OCI-LY7 (cell line): ENCODE measurements at regions of chr12 and their contacts with region 1.

Region 1: DNA sequence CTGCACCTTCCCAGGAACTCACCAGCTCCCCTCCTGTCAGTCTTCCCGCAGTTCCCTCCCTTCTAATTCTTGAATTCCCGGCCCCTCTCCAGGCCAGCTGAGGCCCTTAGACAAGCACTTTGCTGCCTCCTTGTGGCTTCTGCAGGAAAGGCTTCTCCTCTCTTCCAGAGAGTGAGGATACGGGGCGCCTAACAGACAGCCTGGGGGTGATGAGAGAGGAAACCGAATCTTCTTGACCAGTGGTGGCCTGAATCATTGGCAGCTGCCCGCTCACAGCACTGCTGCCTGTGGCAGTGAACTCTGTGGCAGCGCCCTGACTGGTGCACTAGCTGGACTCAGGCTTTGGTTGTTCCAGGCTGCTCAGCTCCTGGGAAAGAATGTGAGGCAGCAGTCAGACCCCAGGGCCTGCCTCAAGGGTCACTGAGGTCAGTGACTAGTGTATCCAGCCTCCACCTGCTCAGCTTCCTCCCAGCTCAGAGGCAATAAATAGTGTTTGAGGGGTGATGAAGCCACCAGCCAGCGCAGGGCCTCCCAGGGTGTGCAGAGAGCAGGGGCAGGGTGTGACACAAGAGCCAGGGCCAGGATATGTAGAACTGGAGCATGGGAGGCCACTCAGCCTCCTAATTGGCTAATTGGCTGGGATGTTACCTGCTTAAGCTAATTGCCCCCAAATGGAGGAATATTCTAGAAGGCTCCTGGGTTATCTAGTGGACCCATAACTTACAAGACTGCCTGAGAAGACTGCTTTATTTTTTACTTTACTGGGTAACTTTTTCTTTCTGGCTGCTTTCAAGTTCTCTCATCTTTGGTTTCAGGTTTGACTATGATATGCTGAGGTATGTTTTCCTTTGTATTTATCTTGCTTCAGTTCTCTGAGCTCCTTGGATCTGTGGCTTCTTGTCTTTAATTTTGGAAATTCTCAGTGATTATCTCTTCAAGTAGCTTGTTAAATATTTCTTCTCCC is 12.9 kb upstream of the MCRS1 start:
- DNase-seq: peak; percentile 69
- H3K4me3 ChIP-seq: no peak overlapping the region
- H3K27ac ChIP-seq: no peak overlapping the region
- H3K4me1 ChIP-seq: no peaks in the 10 kb centered on the region
- CTCF ChIP-seq: peak; percentile 90

Region 2: DNA sequence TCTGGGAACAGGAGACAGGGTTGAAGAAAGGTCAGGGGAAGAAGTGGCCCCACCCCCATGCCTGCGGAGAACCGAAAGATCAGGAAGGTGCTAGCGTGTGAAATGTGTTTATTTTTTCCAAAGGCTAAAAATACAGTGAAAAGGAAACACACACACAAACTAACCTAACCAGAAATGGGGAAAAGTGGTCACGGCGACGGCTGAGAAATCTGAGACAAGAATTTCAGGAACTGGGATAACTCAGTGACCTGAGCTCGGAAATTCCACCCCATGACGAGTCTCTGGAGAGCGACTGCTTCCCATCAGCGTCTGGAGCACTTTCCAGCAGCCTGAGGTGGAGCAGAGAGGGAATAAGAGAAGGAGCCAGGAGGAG is 698.6 kb before region 1 on chr12:
- CTCF ChIA-PET with region 1: no interaction called
- POLR2A ChIA-PET with region 1: no interaction called
- intact Hi-C with region 1: no loop called
- DNase-seq: no peak
- H3K4me3 ChIP-seq: no peak overlapping the region
- H3K27ac ChIP-seq: no peak overlapping the region
- H3K4me1 ChIP-seq: no peaks in the 10 kb centered on the region
- CTCF ChIP-seq: no peak

Region 3: GRCh38 chr12:49553512-49554088 is 27.3 kb before region 1 on chr12:
- CTCF ChIA-PET with region 1: interaction called, 4 read pairs
- POLR2A ChIA-PET with region 1: no interaction called
- intact Hi-C with region 1: loop called (anchors 1 kb)
- DNase-seq: peak; percentile 81
- H3K4me3 ChIP-seq: no peak overlapping the region
- H3K27ac ChIP-seq: no peak overlapping the region
- H3K4me1 ChIP-seq: peaks cover 19% of the 10 kb centered on the region
- CTCF ChIP-seq: peak; percentile 94